ENCODE measurements at regions of chr15 and their contacts with region 1.

Region 1: DNA sequence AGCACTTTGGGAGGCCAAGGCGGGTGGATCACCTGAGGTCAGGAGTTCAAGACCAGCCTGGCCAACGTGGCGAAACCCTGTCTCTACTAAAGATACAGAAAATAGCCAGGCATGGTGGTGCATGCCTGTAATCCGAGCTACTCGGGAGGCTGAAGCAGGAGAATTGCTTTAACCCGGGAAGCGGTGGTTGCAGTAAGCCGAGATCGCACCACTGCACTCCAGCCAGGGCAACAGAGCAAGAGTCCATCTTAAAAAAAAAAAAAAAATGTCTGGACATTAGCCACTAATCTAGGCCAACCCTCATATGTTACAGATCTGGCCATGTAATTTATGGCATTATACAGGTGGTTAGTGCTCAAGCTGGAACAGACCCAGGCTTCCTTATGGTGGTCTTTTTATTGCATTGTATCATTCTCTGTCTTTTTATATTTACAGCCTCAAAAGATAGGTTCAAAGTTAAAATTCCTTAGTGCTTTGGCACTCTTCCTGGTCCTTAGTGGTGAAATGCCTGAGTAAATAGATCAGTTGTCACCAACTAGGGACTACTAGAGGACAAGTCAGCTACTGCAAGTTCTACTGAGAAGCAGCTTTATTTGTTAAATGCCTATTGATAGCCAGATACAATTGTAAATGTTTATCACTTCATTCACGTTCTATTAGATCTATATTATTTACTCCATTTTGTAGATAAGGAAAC is 16.0 kb downstream of the STARD9 start:
- DNase-seq: no peak
- H3K4me3 ChIP-seq: no peak overlapping the region
- H3K27ac ChIP-seq: no peak overlapping the region
- H3K4me1 ChIP-seq: peaks cover 0 to 4% (median under 1%) of the 10 kb centered on the region in 4 experiments; a peak in 2 of 7 replicates
- H3K27me3 ChIP-seq: no peaks in the 10 kb centered on the region
- CTCF ChIP-seq: peak in 1 of 3 experiments; percentile 48; a peak in 1 of 4 replicates
- EP300 ChIP-seq: no peak
- POLR2A ChIP-seq: no peak
- RAD21 ChIP-seq: peak; percentile 3 to 37; a peak in 3 of 4 replicates

Region 2: DNA sequence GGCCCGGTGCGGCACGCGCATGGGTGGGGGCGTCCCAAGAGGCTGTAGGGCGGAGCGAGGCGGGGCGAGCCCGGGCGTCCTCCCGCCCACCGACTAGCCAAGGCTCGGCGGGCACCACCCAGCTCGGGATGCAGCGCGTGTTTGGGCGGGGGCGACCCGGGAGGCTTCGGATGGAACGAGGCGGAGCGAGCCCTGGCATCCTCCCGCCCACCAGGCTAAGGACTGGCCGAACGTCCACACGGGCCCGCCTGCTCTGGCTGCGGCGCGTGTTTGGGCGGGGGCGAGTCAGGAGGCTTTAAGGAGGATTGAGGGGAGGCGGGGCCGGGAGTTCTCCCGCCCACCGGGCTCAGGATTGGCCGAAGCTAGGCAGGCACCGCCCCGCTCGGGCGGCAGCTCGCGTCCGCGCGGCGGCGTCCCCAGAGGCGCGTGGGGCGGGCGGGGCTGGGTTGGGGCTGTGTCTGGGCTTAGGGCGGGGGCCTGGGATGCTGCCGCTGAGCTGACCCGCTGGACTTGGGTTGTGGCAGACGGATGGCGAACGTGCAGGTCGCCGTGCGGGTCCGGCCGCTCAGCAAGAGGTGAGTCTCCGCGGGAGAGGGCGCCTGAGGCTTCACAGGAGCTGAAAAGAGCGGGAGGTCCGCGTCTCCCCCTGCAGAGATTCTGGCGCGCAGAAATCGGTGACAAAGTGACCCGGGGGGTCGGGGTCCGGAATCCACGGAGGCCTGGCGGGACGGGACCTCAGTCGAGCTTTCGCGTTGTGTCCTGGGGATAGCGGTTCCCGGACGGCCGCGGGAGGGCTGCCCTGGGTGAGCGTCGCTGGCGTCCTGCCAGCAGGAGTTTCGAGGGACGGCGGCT is 16.0 kb before region 1 on chr15 and contains the start of gene STARD9:
- CTCF ChIA-PET with region 1: interaction called, 28 read pairs
- POLR2A ChIA-PET with region 1: interaction called, 13 read pairs
- DNase-seq: peak; percentile 97
- H3K4me3 ChIP-seq: peak within 1 kb of the TSS; percentile 67 to 80 (median 72)
- H3K27ac ChIP-seq: no peak within 1 kb of the TSS
- H3K4me1 ChIP-seq: no peaks in the 10 kb centered on the region; a peak in 1 of 7 replicates
- H3K27me3 ChIP-seq: peaks cover 1 to 11% (median 9%) of the 10 kb centered on the region in 4 experiments
- CTCF ChIP-seq: no peak
- EP300 ChIP-seq: no peak
- POLR2A ChIP-seq: peak in 1 of 2 experiments; percentile 71; a peak in 2 of 3 replicates
- RAD21 ChIP-seq: no peak
- total RNA-seq, gene STARD9: 6.0 and 7.0 TPM in 2 replicates

Region 3: GRCh38 chr15:42581272-42581730 is 10.1 kb before region 1 on chr15:
- CTCF ChIA-PET with region 1: interaction called, 28 read pairs
- POLR2A ChIA-PET with region 1: interaction called, 13 read pairs
- DNase-seq: peak; percentile 57 to 84
- H3K4me3 ChIP-seq: peak overlapping the region; percentile 54 to 63 (median 55)
- H3K27ac ChIP-seq: no peak overlapping the region; the same call in 1 of the 2 replicates
- H3K4me1 ChIP-seq: peaks cover 10 to 19% (median 15%) of the 10 kb centered on the region in 4 experiments; a peak in 6 of 7 replicates
- H3K27me3 ChIP-seq: peaks cover 1 to 6% (median 5%) of the 10 kb centered on the region in 4 experiments
- CTCF ChIP-seq: no peak
- EP300 ChIP-seq: no peak
- POLR2A ChIP-seq: peak in 1 of 2 experiments; percentile 76; a peak in 2 of 3 replicates
- RAD21 ChIP-seq: no peak

Region 4: DNA sequence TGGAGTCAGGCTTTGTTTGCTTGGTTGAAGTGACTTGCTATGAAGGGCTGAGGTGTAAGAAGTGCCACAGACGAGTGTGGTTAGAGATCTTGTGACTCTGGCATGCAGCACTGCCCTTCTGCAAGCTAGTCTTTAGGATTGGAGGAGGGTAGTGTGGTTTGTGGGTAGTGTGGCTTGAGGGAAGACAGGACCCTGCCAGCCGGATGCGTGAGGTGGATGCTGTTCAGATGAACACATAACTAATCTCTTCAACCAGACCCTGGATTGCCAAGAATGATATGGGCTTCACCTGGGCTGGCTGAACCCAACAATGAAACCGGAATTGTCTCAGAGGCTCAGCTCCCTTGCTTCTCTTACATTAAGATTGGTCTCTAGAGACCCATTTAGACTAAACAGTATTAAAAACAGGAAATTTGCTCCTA is 16.7 kb after region 1 on chr15:
- CTCF ChIA-PET with region 1: interaction called, 23 read pairs
- POLR2A ChIA-PET with region 1: interaction called, 3 read pairs
- DNase-seq: no peak
- H3K4me3 ChIP-seq: no peak overlapping the region
- H3K27ac ChIP-seq: no peak overlapping the region
- H3K4me1 ChIP-seq: peaks cover 0 to 6% (median 2%) of the 10 kb centered on the region in 4 experiments; a peak in 3 of 7 replicates
- H3K27me3 ChIP-seq: no peaks in the 10 kb centered on the region
- CTCF ChIP-seq: no peak
- EP300 ChIP-seq: no peak
- POLR2A ChIP-seq: no peak
- RAD21 ChIP-seq: no peak

Region 5: DNA sequence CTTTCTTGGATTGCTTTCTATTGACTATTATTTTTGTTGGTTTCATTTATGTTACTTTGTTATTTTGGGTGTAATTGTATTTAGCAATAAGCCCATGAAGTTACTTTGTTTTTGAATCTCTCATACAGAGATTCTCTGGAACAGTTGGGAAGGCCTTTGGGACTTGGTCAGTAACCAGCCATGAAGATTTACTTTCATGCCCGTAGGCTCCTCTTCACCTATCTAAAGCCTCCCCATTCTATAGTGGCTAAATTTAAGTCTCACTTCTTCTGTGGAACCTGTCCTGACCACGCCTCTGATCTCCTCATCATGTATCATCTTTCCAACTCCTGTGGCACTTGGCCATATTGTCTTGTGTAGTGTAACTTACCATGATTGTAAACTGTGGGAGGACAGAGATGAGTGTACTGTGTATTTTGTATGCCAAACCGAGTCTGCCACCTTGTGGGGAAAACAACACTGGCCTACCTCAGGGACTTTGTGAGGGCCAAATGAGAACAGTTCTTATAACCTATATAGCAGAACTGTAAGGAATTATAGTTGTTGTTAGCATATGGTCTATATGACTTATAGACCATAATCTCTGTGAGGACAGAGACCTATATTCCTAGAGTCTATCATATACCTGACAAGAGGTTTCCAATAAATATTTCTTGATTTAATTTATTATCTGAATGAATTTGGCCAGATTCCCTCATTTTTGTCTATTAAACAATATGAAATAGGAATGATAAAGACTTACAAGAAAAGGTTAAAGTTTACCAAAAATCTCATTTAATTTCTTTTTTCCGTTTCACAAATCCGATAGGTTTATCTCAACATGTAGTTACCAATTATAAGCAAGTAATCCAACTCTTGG is 59.1 kb after region 1 on chr15:
- CTCF ChIA-PET with region 1: interaction called, 10 read pairs
- POLR2A ChIA-PET with region 1: no interaction called
- DNase-seq: peak; percentile 13 to 71
- H3K4me3 ChIP-seq: no peak overlapping the region
- H3K27ac ChIP-seq: no peak overlapping the region
- H3K4me1 ChIP-seq: no peaks in the 10 kb centered on the region
- H3K27me3 ChIP-seq: no peaks in the 10 kb centered on the region
- CTCF ChIP-seq: peak; percentile 46 to 83 (median 66)
- EP300 ChIP-seq: no peak
- POLR2A ChIP-seq: no peak
- RAD21 ChIP-seq: peak; percentile 94 to 95